ENCODE measurements at regions of chr12 and their contacts with region 1.

Region 1: GRCh38 chr12:99043319-99043914 is 398.3 kb downstream of the APAF1 start:
- DNase-seq: peak; percentile 20
- H3K4me3 ChIP-seq: no peak overlapping the region
- H3K27ac ChIP-seq: no peak overlapping the region
- H3K4me1 ChIP-seq: no peaks in the 10 kb centered on the region
- H3K27me3 ChIP-seq: no peaks in the 10 kb centered on the region
- CTCF ChIP-seq: peak; percentile 50 to 75 (median 69)
- POLR2A ChIP-seq: no peak

Region 2: DNA sequence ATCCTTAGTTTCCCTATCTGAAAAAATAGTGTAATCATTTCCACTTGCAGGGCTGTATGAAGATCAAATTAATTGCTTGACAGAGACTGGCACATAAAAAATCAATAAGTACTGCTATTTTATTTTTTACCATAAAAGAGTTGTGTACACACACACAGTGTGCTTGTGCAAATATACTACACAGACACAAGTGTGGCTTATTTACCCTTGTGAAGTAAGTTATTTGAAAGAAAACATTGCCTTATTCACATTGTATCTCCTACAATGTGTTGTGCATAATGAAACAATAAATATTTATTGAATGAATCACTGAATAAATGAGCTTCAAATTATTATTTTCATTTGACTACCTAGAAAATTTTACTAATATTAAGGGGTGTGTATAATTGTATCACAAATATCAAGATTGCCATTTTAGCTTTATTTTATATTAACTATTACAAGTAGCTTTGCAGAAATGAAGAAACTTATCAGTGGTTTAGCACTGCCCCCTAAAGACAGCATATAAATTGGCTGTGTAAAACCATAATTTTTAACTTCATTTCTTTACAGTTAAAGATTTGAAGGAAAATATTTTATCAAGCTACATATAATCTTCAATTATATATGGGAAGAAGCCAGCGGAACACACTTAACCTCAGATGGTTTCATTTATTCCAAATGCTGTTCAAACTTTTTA is 615.4 kb after region 1 on chr12:
- intact Hi-C with region 1: loop called (anchors 5 kb)
- DNase-seq: no peak
- H3K4me3 ChIP-seq: no peak overlapping the region
- H3K27ac ChIP-seq: no peak overlapping the region
- H3K4me1 ChIP-seq: no peaks in the 10 kb centered on the region
- H3K27me3 ChIP-seq: no peaks in the 10 kb centered on the region
- CTCF ChIP-seq: no peak
- POLR2A ChIP-seq: no peak

Region 3: GRCh38 chr12:99722690-99723486 is 679.5 kb after region 1 on chr12:
- intact Hi-C with region 1: no loop called
- DNase-seq: no peak
- H3K4me3 ChIP-seq: no peak overlapping the region
- H3K27ac ChIP-seq: no peak overlapping the region
- H3K4me1 ChIP-seq: no peaks in the 10 kb centered on the region
- H3K27me3 ChIP-seq: no peaks in the 10 kb centered on the region
- CTCF ChIP-seq: no peak
- POLR2A ChIP-seq: no peak

Region 4: GRCh38 chr12:99767809-99768208 is 724.4 kb after region 1 on chr12:
- intact Hi-C with region 1: loop called (anchors 2 kb)
- DNase-seq: no peak
- H3K4me3 ChIP-seq: no peak overlapping the region
- H3K27ac ChIP-seq: no peak overlapping the region
- H3K4me1 ChIP-seq: no peaks in the 10 kb centered on the region
- H3K27me3 ChIP-seq: no peaks in the 10 kb centered on the region
- CTCF ChIP-seq: peak in 3 of 4 experiments; percentile 29 to 38 (median 32)
- POLR2A ChIP-seq: no peak